Dorsolateral prefrontal cortex (tissue), 120 donors: ENCODE measurements at regions of chr17 and their contacts with region 1.

Region 1: DNA sequence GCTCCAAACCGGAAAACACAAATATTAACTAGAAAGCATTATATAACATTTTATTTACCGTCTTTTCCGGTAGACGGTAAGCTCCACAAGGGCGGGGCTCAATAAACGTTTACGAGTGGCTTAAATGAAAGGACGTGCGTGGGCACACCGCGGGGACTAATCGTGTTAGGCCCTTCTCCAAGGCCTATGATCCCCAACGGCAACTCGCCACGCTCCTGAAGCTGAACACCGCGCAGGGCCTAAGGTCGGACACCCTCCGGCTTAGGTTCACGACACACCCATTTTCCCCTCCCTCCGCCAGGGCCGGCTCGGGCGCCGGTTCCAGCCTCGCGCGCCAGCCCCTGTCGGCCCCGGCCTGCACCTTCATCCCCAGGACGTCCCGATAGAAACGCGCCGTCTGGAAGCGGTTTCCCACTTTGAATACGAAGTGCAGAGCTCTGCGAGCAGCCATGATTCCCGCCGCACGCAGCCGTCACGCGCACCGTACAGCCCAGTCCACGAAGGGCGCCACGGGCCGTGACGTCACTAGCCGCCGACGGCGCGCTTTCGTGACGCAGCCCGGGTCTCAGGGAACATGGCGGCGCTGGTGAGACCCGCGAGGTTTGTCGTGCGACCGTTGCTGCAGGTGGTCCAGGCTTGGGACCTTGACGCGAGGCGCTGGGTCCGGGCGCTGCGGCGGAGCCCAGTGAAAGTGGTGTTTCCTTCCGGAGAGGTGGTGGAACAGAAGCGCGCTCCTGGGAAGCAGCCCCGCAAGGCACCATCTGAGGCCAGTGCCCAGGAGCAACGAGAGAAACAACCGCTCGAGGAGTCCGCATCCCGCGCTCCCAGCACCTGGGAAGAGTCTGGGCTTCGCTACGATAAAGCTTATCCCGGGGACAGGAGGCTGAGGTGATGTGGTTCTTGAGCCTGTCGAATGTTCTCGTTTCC is at the starts of genes GLOD4 and MRM3:
- DNase-seq: peak; percentile 90 to 97 (median 93)
- H3K4me3 ChIP-seq: peak within 1 kb of the TSS; percentile 68 to 100 (median 96)
- H3K27ac ChIP-seq: peak within 1 kb of the TSS in 55 of 59 donors; percentile 26 to 91 (median 78)
- H3K27me3 ChIP-seq: no peaks in the 10 kb centered on the region
- CTCF ChIP-seq: peak in 50 of 56 donors; percentile 5 to 68 (median 44)
- total RNA-seq, gene GLOD4: 33.7 to 99.3 (median 65.6) TPM
- total RNA-seq, gene MRM3: 8.5 to 20.4 (median 15.0) TPM

Region 2: DNA sequence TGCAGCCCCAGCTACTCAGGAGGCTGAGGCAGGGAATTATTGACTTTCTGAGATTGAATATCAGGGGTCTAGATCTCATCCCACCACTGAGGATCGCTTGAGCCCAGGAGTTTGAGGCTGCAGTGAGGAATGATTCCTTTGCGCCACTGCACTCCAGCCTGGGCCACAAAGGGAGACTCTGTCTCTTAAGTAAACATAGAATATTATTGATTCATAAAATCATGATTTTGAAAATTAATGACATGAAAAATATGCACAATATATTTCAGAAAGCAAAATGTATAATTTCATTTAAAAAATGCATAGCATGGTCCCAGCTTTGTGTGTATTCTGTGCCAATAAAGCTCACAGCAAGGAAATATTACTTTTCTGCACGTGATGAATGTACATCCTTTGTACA is 65.8 kb before region 1 on chr17:
- intact Hi-C with region 1: loop called in 1 of 2 experiments (anchors 5 kb)
- DNase-seq: no peak
- H3K4me3 ChIP-seq: peak overlapping the region in 46 of 59 donors; percentile 4 to 99 (median 96)
- H3K27ac ChIP-seq: no peak overlapping the region
- H3K27me3 ChIP-seq: no peaks in the 10 kb centered on the region
- CTCF ChIP-seq: no peak

Region 3: GRCh38 chr17:752002-752619 is 30.0 kb before region 1 on chr17 and contains the start of gene GEMIN4:
- intact Hi-C with region 1: loop called (anchors 2 kb)
- DNase-seq: peak; percentile 83 to 94 (median 89)
- H3K4me3 ChIP-seq: peak within 1 kb of the TSS; percentile 71 to 98 (median 91)
- H3K27ac ChIP-seq: peak within 1 kb of the TSS in 47 of 59 donors; percentile 26 to 89 (median 70)
- H3K27me3 ChIP-seq: no peaks in the 10 kb centered on the region
- CTCF ChIP-seq: peak; percentile 92 to 100 (median 98)
- total RNA-seq, gene GEMIN4: 9.5 to 23.3 (median 14.0) TPM